T-cell (primary cell): ENCODE measurements at regions of chr16 and their contacts with region 1.

Region 1: DNA sequence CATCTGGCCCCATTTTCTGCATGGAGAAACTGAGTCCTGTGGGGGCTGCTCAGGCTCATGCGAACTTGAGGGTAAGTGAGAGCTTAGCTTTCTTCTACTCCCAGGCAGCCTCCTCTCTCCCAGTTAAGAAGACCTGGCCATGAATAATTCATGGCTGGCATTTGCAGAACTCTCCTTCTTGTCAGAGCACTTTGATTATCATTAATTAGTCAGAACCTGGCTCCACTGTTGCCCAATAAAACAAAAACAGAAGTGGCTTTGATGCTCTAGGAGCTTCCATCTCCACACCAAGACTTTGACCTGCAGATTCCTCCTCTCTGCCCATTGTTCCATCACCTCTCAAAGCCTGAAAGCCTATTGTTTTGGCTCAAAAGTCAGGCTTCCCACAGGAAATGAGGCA is 45.5 kb upstream of the CDH3 start:
- DNase-seq: no peak
- ATAC-seq: no peak
- H3K4me3 ChIP-seq: no peak overlapping the region
- H3K4me3 Mint-ChIP-seq: no peak overlapping the region
- H3K27ac ChIP-seq: no peak overlapping the region
- H3K27ac Mint-ChIP-seq: no peak overlapping the region
- H3K4me1 ChIP-seq: no peaks in the 10 kb centered on the region
- H3K4me1 Mint-ChIP-seq: no peaks in the 10 kb centered on the region
- H3K27me3 ChIP-seq: no peaks in the 10 kb centered on the region
- H3K27me3 Mint-ChIP-seq: no peaks in the 10 kb centered on the region

Region 2: DNA sequence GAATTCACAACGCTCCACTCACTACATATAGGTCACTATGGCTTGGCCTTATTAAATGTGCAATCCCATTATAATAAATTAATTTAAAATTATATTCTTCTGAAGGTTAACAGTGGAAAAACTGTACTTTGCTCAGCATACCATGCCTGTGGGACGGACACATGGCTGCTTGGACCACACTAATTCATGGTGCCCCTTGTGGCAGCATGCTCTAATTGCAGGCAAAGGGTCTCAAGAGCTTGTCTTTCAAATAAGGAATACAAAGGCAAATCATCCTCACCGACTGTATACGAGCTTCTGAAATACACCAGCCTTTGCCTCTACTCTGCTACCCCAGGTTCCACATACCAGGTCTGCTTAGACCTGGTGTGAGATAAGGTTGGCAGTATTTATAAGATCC is 163.0 kb before region 1 on chr16:
- CTCF ChIA-PET with region 1: no interaction called
- POLR2A ChIA-PET with region 1: no interaction called
- DNase-seq: no peak
- ATAC-seq: no peak
- H3K4me3 ChIP-seq: no peak overlapping the region
- H3K4me3 Mint-ChIP-seq: no peak overlapping the region
- H3K27ac ChIP-seq: no peak overlapping the region
- H3K27ac Mint-ChIP-seq: no peak overlapping the region
- H3K4me1 ChIP-seq: peaks cover 6 to 15% of the 10 kb centered on the region in 2 experiments
- H3K4me1 Mint-ChIP-seq: peaks cover 16 to 28% (median 19%) of the 10 kb centered on the region in 3 donors
- H3K27me3 ChIP-seq: peaks cover 0 to 7% of the 10 kb centered on the region in 2 experiments
- H3K27me3 Mint-ChIP-seq: peaks cover 0 to 13% of the 10 kb centered on the region in 2 donors

Region 3: DNA sequence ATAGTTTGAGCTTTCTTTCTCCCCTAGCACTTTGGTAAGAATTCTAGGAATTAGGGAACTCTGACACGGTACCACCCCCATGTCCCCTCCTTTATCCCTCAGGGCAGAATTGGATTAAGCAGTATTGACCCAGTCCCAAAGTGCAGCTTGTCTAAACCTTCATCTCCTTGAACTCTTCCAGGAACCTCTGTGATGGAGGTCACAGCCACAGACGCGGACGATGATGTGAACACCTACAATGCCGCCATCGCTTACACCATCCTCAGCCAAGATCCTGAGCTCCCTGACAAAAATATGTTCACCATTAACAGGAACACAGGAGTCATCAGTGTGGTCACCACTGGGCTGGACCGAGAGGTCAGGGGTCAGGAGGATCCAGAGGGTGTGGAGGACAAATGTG is 211.9 kb after region 1 on chr16:
- CTCF ChIA-PET with region 1: interaction called in 1 of 2 experiments, 10 read pairs
- POLR2A ChIA-PET with region 1: no interaction called
- DNase-seq: no peak
- ATAC-seq: no peak
- H3K4me3 ChIP-seq: no peak overlapping the region
- H3K4me3 Mint-ChIP-seq: no peak overlapping the region
- H3K27ac ChIP-seq: no peak overlapping the region
- H3K27ac Mint-ChIP-seq: no peak overlapping the region
- H3K4me1 ChIP-seq: no peaks in the 10 kb centered on the region
- H3K4me1 Mint-ChIP-seq: no peaks in the 10 kb centered on the region
- H3K27me3 ChIP-seq: no peaks in the 10 kb centered on the region
- H3K27me3 Mint-ChIP-seq: peaks cover 0 to 6% of the 10 kb centered on the region in 2 donors